A549 (cell line): ENCODE measurements at regions of chr11 and their contacts with region 1.

Region 1: GRCh38 chr11:72179804-72180396 is 12.0 kb upstream of the FOLR1 start:
- DNase-seq: no peak
- ATAC-seq: no peak
- H3K4me3 ChIP-seq: no peak overlapping the region
- H3K27ac ChIP-seq: no peak overlapping the region
- H3K4me1 ChIP-seq: peaks cover 11% of the 10 kb centered on the region; the same call in 2 of the 3 replicates
- CTCF ChIP-seq: no peak
- EP300 ChIP-seq: no peak
- POLR2A ChIP-seq: no peak
- RAD21 ChIP-seq: no peak

Region 2: GRCh38 chr11:72009186-72009585 is 170.7 kb before region 1 on chr11:
- CTCF ChIA-PET with region 1: no interaction called
- POLR2A ChIA-PET with region 1: no interaction called
- DNase-seq: no peak
- ATAC-seq: no peak
- H3K4me3 ChIP-seq: no peak overlapping the region
- H3K27ac ChIP-seq: no peak overlapping the region
- H3K4me1 ChIP-seq: peaks cover 26% of the 10 kb centered on the region
- CTCF ChIP-seq: no peak
- EP300 ChIP-seq: no peak
- POLR2A ChIP-seq: no peak
- RAD21 ChIP-seq: no peak

Region 3: DNA sequence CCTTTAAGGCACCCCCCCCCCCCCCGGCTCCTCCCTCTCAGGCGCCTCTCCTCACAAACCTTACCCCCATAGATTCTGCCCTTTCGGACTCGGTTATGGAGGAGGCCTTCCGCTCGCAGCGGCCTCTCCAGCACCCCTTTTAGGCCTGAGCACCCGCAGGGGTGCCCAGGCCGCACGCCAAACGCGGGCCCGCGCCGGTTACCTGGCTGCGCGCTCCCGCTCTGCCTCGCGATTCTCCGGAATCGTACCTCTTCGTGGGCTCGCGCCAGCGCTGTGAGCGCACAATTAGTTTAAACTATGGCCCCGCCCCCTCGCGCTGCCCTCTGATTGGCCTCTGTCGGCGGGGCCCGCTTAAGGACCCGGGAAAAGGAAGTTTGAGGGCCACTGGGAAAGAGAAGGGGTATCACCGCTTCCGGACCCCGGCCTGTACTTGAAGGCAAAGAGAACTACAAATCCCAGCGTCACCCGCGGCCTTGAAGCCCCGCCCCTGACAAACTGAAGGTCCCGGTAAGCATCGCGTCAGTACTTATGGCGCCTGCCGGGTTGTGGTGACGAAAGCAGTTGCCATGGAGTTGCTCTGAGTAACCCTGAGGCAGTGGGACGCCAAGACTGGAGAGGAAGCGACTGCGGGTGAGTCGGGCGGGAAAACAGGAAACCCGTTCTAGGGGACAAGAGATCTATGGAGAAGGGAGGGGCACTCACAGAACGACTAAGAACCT is 99.5 kb before region 1 on chr11 and contains the starts of genes LRRC51 and NUMA1:
- CTCF ChIA-PET with region 1: no interaction called
- POLR2A ChIA-PET with region 1: no interaction called
- DNase-seq: peak; percentile 91 to 100
- ATAC-seq: peak; percentile 96 to 97
- H3K4me3 ChIP-seq: peak within 1 kb of the TSS; percentile 85
- H3K27ac ChIP-seq: peak within 1 kb of the TSS; percentile 90
- H3K4me1 ChIP-seq: peaks cover 19% of the 10 kb centered on the region
- CTCF ChIP-seq: no peak
- EP300 ChIP-seq: no peak
- POLR2A ChIP-seq: peak; percentile 54
- RAD21 ChIP-seq: no peak
- polyA plus RNA-seq, gene LRRC51: 14.3 and 16.3 TPM in 2 replicates
- polyA plus RNA-seq, gene NUMA1: 51.5 and 64.6 TPM in 2 replicates

Region 4: DNA sequence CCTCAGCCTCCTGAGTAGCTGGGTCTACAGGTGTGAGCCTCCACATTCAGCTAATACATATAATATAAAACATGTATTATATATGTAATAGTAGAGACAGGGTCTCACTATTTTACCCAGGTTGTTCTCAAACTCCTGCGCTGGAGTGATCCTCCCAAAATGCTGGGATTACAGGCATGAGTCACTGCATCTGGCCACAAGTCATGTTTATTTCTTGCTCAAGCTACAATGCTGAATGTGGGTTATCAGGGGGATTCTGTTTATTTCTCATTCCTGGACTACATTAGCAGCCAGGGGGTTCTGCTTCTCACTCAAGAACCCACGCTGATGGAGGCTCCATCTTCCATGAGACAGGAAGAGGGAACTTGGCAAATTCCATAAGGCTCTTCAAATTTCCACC is 19.6 kb before region 1 on chr11:
- CTCF ChIA-PET with region 1: interaction called, 21 read pairs
- POLR2A ChIA-PET with region 1: no interaction called
- DNase-seq: no peak
- ATAC-seq: no peak
- H3K4me3 ChIP-seq: no peak overlapping the region
- H3K27ac ChIP-seq: no peak overlapping the region
- H3K4me1 ChIP-seq: peaks cover 9% of the 10 kb centered on the region
- CTCF ChIP-seq: no peak
- EP300 ChIP-seq: no peak
- POLR2A ChIP-seq: no peak
- RAD21 ChIP-seq: no peak

Region 5: DNA sequence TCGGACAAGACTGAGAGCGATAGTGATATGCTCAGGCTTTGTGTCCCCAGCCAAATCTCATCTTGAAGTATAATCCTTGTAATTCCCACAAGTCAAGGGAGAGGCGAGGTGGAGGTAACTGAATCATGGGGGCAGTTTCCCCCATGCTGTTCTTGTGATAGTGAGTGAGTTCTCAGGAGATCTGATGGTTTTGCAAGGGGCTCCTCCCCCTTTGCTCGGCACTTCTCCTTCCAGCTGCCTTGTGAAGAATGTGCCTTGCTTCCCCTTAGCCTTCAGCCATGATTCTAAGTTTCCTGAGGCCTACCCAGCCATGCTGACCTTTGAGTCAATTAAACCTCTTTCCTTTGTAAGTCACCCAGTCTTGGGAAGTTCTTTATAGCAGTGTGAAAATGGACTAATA is 29.2 kb after region 1 on chr11:
- CTCF ChIA-PET with region 1: interaction called, 11 read pairs
- POLR2A ChIA-PET with region 1: no interaction called
- DNase-seq: no peak
- ATAC-seq: no peak
- H3K4me3 ChIP-seq: no peak overlapping the region
- H3K27ac ChIP-seq: no peak overlapping the region
- H3K4me1 ChIP-seq: no peaks in the 10 kb centered on the region
- CTCF ChIP-seq: no peak
- EP300 ChIP-seq: no peak
- POLR2A ChIP-seq: no peak
- RAD21 ChIP-seq: no peak

Region 6: DNA sequence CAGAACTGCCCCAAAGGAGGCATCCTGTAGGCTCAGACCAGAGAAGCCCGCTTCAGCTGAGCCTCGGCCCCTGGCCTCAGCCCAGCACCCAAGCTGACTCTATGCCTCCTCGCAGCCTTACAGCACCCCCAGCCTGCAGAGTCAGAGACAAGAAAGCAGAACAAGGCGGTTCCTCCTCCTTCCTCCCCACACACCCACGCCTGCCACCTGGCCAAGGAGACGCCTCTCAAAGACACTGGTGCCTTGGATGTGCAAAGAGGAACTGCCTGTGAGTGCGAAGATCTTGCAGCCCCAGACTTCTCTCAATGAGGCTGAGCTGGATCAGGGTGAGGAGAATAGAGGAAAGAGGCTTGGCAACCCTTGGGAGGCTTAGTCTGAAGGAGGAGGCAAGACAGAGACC is 434.1 kb after region 1 on chr11:
- CTCF ChIA-PET with region 1: no interaction called
- POLR2A ChIA-PET with region 1: no interaction called
- DNase-seq: no peak
- ATAC-seq: no peak
- H3K4me3 ChIP-seq: no peak overlapping the region
- H3K27ac ChIP-seq: no peak overlapping the region
- H3K4me1 ChIP-seq: 0 out of 3 replicates have a peak, but pooled peaks cover 3% of the 10 kb centered on the region
- CTCF ChIP-seq: no peak
- EP300 ChIP-seq: no peak
- POLR2A ChIP-seq: no peak
- RAD21 ChIP-seq: no peak